PC-3 (cell line): ENCODE measurements at regions of chr1 and their contacts with region 1.

Region 1: GRCh38 chr1:152034646-152035405 is 2.0 kb downstream of the S100A11 start:
- DNase-seq: peak; percentile 90
- ATAC-seq: peak; percentile 69
- H3K4me3 ChIP-seq: peak overlapping the region; percentile 77
- H3K27ac ChIP-seq: peak overlapping the region; percentile 90
- H3K4me1 ChIP-seq: peaks cover 33% of the 10 kb centered on the region
- H3K27me3 ChIP-seq: no peaks in the 10 kb centered on the region
- CTCF ChIP-seq: peak; percentile 89

Region 2: GRCh38 chr1:151984313-151984956 is 50.4 kb before region 1 on chr1:
- CTCF ChIA-PET with region 1: interaction called, 10 read pairs
- POLR2A ChIA-PET with region 1: interaction called, 5 read pairs
- intact Hi-C with region 1: no loop called
- DNase-seq: no peak
- ATAC-seq: no peak
- H3K4me3 ChIP-seq: no peak overlapping the region
- H3K27ac ChIP-seq: no peak overlapping the region
- H3K4me1 ChIP-seq: peaks cover 76% of the 10 kb centered on the region
- H3K27me3 ChIP-seq: no peaks in the 10 kb centered on the region
- CTCF ChIP-seq: no peak